ENCODE measurements at regions of chr12 and their contacts with region 1.

Region 1: DNA sequence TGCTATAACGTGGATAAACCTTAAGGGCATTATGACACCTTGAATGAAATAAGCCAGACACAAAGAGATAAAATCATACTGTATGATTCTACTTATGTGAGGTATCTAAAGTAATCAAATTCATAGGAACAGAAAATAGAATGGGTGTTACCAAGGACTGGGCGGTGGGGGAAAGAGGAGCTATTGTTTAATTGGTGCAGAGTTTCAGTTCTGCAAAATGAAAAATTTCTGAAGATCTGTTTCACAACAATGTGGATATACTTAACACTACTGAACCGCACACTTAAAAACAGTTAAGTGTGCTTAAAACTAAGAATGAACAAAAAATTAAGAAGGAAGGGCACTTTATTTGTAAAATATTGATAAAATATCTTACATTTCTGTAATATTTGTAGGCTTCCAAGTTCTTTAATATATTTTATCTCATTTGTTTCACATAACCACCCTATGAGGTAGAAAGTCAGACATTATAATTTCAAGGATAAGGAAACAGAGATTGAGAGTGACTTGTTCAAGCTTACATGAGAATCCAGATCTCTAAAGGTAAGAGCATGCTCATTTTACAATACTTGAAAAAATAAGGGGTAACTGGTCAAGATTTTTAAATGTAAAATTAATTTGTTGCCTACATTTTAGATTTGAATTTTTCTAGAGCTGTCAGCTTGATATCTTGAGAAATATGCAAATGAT is 14.9 kb downstream of the LTA4H start:
- DNase-seq: no peak
- ATAC-seq: peak; percentile 96
- H3K4me3 Mint-ChIP-seq: peak overlapping the region; percentile 63
- H3K27ac Mint-ChIP-seq: peak overlapping the region; percentile 90
- H3K4me1 Mint-ChIP-seq: peaks cover 33% of the 10 kb centered on the region
- H3K27me3 Mint-ChIP-seq: no peaks in the 10 kb centered on the region
- CTCF ChIP-seq: no peak

Region 2: GRCh38 chr12:96047229-96048211 is 27.1 kb after region 1 on chr12:
- CTCF ChIA-PET with region 1: no interaction called
- POLR2A ChIA-PET with region 1: interaction called, 9 read pairs
- intact Hi-C with region 1: loop called (anchors 1 kb)
- DNase-seq: no peak
- ATAC-seq: peak; percentile 19
- H3K4me3 Mint-ChIP-seq: peak overlapping the region; percentile 53
- H3K27ac Mint-ChIP-seq: peak overlapping the region; percentile 88
- H3K4me1 Mint-ChIP-seq: peaks cover 69% of the 10 kb centered on the region
- H3K27me3 Mint-ChIP-seq: no peaks in the 10 kb centered on the region
- CTCF ChIP-seq: no peak

Measured in activated B cell treated with CpG ODN at 0.5 μM for 24 hours (primary cell).